Mammary epithelial cell (primary cell): ENCODE measurements at regions of chr16 and their contacts with region 1.

Region 1: GRCh38 chr16:85275533-85276249 is 163.4 kb upstream of the CIBAR2 start:
- DNase-seq: peak; percentile 32
- H3K4me3 ChIP-seq: no peak overlapping the region
- H3K27ac ChIP-seq: no peak overlapping the region
- H3K4me1 ChIP-seq: no peaks in the 10 kb centered on the region
- H3K27me3 ChIP-seq: no peaks in the 10 kb centered on the region
- CTCF ChIP-seq: peak; percentile 88 to 94

Region 2: DNA sequence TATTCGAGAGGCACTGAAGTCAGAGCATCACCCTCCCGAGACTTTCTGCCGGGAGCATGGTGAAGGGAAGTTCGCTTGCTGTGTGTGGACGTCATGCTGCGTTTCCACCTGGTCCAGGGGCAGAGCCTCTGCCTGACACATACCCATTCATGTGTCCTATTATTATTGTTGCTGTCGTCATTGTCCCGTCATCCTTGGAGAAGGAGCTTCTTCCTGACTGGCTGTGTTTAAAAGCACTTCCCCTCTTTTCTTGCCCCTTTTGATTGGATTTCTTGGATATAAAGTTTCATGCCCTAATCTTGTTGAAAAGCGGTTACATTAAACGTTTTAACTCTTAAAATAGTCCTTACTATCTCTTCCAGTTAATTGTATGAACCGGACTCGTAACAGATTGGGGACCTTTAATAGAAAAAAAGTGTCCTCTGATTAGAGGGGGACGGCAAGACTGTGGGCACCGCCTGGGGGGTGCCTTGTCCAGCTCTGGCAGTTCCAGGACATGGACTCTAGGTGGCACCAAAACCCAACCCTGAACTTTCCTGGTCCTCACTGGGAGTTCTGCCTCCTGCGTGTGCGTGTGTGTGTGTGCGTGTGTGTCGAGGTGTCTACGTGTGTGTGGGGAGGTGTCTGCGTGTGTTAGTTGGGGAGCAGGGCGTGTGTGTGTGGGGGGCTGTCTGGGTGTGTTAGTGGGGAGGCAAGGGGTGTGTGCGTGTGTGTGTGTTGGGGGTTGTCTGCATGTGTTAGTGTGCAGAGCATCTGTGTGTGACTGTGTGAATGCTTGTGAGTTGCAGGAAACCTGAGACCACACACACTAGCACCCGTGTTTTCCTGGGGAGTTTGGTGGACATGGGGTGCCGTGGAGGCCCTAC is 30.2 kb before region 1 on chr16:
- CTCF ChIA-PET with region 1: no interaction called
- dilution Hi-C with region 1: loop called (anchors 5 kb)
- in situ Hi-C with region 1: no loop called
- intact Hi-C with region 1: no loop called
- DNase-seq: peak; percentile 38
- H3K4me3 ChIP-seq: no peak overlapping the region
- H3K27ac ChIP-seq: no peak overlapping the region
- H3K4me1 ChIP-seq: no peaks in the 10 kb centered on the region
- H3K27me3 ChIP-seq: no peaks in the 10 kb centered on the region
- CTCF ChIP-seq: peak; percentile 60 to 92

Region 3: DNA sequence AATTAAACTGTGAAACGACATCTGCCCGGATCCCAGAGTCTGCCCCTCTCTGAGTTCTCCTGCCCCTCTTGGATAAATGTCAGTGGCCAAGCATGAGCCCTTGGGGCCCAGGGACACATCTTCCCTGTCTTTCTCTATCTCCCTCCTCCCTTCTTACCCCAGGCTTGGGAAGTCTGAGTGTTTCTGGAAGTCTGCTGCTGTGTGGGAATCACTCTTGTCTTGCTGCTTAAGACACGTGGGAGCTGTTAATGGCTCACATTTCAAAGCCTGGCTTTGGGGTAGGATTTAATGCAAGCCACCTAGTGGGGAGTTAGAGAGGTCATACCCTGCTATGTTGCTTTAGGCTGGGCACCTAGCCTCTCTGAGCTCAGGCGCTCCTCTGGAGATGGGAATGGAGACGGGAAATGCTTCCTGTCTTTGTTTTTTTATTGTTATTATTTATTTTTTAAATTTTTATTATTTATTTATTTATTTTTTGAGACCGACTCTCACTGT is 55.0 kb after region 1 on chr16:
- CTCF ChIA-PET with region 1: no interaction called
- dilution Hi-C with region 1: no loop called
- in situ Hi-C with region 1: no loop called
- intact Hi-C with region 1: loop called (anchors 1 kb)
- DNase-seq: peak; percentile 61
- H3K4me3 ChIP-seq: no peak overlapping the region
- H3K27ac ChIP-seq: no peak overlapping the region
- H3K4me1 ChIP-seq: no peaks in the 10 kb centered on the region
- H3K27me3 ChIP-seq: no peaks in the 10 kb centered on the region
- CTCF ChIP-seq: peak; percentile 50 to 52

Region 4: DNA sequence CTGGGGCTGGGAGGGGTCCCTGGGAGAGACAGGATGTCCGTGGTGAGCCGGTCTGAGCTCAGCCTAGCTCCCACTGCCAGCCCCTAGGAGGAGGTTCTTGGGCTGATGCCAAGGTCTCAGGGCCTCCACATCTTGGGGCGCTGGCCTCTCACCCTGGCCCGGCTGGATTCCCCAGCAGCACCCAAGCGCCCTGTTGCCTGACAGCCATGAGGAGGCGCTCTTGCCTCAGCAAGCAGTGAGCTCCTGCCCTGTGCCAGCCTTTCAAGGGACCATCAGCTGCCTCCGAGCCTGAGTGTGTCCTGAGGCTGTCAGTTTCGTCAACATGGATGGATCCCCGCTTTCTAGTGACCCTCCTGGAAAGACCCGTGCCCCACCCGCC is 71.5 kb after region 1 on chr16:
- CTCF ChIA-PET with region 1: no interaction called
- dilution Hi-C with region 1: no loop called
- in situ Hi-C with region 1: no loop called
- intact Hi-C with region 1: no loop called
- DNase-seq: no peak
- H3K4me3 ChIP-seq: no peak overlapping the region
- H3K27ac ChIP-seq: no peak overlapping the region
- H3K4me1 ChIP-seq: peaks cover 4% of the 10 kb centered on the region
- H3K27me3 ChIP-seq: no peaks in the 10 kb centered on the region
- CTCF ChIP-seq: peak; percentile 24 to 54

Region 5: DNA sequence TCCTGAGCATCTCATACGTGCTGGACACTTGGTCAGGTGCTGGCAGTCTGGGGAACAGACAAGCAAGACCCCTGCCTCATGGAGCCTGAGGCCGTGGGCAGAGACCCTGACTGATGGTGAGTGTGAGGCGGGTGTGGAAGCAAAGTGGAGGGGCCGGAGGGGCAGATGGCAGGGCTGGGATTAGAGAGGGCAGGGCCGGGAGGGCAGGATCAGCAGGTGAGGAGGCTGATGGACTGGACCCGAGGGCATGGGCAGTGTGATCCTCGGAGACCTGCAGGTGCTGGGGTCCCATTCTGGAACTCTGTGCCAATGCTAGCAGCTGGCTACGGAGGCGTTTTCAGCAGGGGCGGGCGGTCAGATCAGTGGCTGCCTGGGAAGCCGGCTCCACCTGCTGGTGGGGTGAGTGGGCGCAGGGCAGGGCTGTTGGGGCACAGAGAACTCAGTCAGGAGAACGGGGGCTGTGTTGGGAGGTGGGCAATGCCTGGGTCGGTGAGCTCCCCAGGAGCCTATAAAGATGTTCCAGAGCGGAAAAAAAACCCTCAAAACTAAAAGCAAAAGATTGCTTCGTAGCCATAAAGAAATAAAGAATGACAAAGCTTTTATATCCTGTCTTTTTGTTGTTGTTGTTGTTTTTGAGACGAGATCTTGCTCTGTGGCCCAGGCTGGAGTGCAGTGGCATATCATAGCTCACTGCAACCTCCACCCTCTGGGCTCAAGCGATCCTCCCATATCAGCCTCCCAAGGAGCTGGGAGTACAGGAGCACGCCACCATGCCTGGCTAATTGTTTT is 484.1 kb after region 1 on chr16:
- CTCF ChIA-PET with region 1: no interaction called
- dilution Hi-C with region 1: no loop called
- in situ Hi-C with region 1: no loop called
- intact Hi-C with region 1: loop called (anchors 5 kb)
- DNase-seq: peak; percentile 29
- H3K4me3 ChIP-seq: no peak overlapping the region
- H3K27ac ChIP-seq: no peak overlapping the region
- H3K4me1 ChIP-seq: peaks cover 17% of the 10 kb centered on the region
- H3K27me3 ChIP-seq: no peaks in the 10 kb centered on the region
- CTCF ChIP-seq: peak; percentile 59 to 90